MCF 10A (cell line): ENCODE measurements at regions of chr12 and their contacts with region 1.

Region 1: GRCh38 chr12:56315622-56316473 is at the start of gene CNPY2:
- DNase-seq: peak; percentile 99
- H3K4me3 Mint-ChIP-seq: peak within 1 kb of the TSS; percentile 96
- H3K27ac Mint-ChIP-seq: peak within 1 kb of the TSS; percentile 98
- H3K4me1 Mint-ChIP-seq: no peaks in the 10 kb centered on the region
- H3K27me3 Mint-ChIP-seq: no peaks in the 10 kb centered on the region
- CTCF ChIP-seq: no peak
- total RNA-seq, gene CNPY2: 169 and 210 TPM in 2 replicates

Region 2: GRCh38 chr12:56258057-56258819 is 57.6 kb before region 1 on chr12 and contains the start of gene ANKRD52:
- CTCF ChIA-PET with region 1: interaction called, 5 read pairs
- POLR2A ChIA-PET with region 1: interaction called, 14 read pairs
- intact Hi-C with region 1: no loop called
- DNase-seq: peak; percentile 70
- H3K4me3 Mint-ChIP-seq: peak within 1 kb of the TSS; percentile 84
- H3K27ac Mint-ChIP-seq: peak within 1 kb of the TSS; percentile 71
- H3K4me1 Mint-ChIP-seq: peaks cover 29% of the 10 kb centered on the region
- H3K27me3 Mint-ChIP-seq: no peaks in the 10 kb centered on the region
- CTCF ChIP-seq: peak; percentile 59
- total RNA-seq, gene ANKRD52: 46.3 and 73.8 TPM in 2 replicates

Region 3: DNA sequence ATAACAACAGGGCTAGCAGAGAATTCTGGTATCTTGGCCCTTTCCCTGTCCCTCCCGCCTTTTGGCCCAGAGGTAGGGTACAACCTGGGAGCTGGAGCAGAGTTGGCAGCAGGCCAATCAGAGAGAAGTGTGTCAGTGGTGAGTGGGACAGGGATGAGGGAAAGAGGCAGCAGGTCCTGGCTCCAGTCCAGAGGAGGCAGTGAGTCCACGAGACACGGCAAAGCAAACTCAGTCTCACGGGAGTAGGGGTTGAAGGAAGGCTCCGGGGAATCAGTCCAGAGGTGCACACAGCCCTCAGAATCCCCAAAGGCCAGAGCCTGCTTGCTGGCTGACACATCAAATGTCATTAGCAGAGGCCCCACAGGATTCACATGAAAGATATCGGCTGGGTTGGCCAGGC is 10.7 kb after region 1 on chr12:
- CTCF ChIA-PET with region 1: interaction called, 5 read pairs
- POLR2A ChIA-PET with region 1: interaction called, 79 read pairs
- intact Hi-C with region 1: no loop called
- DNase-seq: no peak
- H3K4me3 Mint-ChIP-seq: no peak overlapping the region
- H3K27ac Mint-ChIP-seq: no peak overlapping the region
- H3K4me1 Mint-ChIP-seq: peaks cover 6% of the 10 kb centered on the region
- H3K27me3 Mint-ChIP-seq: no peaks in the 10 kb centered on the region
- CTCF ChIP-seq: no peak

Region 4: DNA sequence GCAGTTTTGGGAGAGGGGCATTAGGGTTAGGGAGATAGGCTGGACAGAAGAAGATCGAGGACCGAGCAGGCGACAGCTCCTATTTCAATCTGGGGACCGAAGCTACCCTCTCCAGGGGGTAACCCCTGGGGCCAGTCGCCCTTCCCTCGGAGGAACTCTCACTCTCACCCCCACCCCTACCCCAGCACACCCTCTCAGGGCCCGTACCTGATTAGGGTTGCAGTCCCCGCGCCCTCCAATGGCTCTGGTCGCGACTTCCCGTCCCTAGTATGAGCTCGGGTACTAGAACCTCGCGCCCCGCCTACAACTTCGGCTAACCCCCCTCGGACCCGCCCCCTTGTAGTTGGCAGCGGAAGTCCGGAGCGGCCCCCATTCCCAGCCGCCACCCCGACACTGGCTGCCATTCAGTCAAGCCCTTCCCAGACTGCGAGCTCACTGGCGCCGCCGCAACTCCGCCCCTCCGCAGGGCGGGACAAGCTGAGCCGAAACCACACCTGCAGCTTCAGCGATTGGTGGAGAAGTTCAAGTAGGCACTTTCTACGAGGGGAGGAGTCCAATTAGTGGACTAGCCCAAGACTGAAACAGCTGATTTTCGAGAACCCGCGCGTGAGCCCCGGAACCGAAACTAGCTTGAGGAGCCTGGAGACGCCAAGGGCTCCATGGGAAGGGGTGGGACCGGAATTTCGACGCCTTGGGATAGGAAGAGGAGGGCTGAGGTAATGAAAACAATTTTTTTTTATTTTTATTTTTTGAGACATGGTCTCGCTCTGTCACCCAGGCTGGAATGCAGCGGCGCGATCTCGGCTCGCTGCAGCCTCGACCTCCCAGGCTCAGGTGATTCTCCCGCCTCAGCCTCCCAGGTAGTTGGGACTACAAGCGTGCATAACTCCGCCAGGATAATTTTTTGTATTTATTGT is 44.3 kb after region 1 on chr12 and contains the start of gene STAT2:
- CTCF ChIA-PET with region 1: no interaction called
- POLR2A ChIA-PET with region 1: interaction called, 34 read pairs
- intact Hi-C with region 1: loop called (anchors 1 kb)
- DNase-seq: peak; percentile 100
- H3K4me3 Mint-ChIP-seq: peak within 1 kb of the TSS; percentile 94
- H3K27ac Mint-ChIP-seq: peak within 1 kb of the TSS; percentile 97
- H3K4me1 Mint-ChIP-seq: peaks cover 8% of the 10 kb centered on the region
- H3K27me3 Mint-ChIP-seq: no peaks in the 10 kb centered on the region
- CTCF ChIP-seq: no peak
- total RNA-seq, gene STAT2: 61.2 and 101 TPM in 2 replicates

Region 5: DNA sequence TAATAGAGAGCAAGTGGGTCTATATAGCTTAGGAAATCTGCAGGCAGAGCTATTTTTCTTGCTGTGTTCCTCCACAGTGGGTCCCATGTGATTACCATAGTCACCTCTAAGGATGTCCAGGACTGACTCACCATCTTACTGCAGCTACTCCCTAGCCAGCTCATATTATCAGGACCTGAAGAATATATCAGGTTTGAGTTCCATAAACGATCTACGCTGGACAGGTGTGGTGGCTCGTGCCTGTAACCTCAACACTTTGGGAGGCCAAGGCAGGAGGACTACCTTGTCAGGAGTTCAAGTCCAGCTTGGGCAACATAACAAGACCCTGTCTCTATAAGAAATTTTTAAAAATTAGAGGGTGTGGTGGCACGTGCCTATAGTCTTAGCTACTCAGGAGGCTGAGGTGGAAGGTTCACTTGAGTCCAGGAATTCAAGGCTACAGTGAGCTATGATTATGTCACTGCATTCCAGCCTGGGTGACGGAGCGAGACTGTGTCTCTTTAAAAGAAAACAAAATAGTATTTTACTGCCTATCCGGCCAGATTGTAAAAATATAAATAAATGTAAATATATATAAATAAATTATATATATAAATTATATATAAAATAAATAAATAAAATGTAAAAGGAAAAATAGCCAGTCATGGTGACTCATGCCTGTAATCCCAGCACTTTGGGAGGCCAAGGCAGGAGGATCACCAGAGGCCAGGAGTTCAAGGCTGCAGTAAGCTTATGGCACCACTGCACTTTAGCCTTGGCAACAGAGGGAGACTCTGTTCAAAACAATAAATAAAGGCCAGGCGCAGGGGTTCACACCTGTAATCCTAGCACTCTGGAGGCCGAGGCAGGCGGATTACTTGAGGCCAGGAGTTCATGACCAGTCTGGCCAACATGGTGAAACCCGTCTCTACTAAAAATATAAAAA is 145.6 kb after region 1 on chr12:
- CTCF ChIA-PET with region 1: interaction called, 15 read pairs
- POLR2A ChIA-PET with region 1: interaction called, 18 read pairs
- intact Hi-C with region 1: loop called (anchors 1 kb)
- DNase-seq: no peak
- H3K4me3 Mint-ChIP-seq: no peak overlapping the region
- H3K27ac Mint-ChIP-seq: no peak overlapping the region
- H3K4me1 Mint-ChIP-seq: peaks cover 6% of the 10 kb centered on the region
- H3K27me3 Mint-ChIP-seq: no peaks in the 10 kb centered on the region
- CTCF ChIP-seq: no peak